GM13977 (cell line): ENCODE measurements at regions of chr7 and their contacts with region 1.

Region 1: GRCh38 chr7:101542527-101543241 is 86.4 kb downstream of the MYL10 start:
- DNase-seq: peak; percentile 78
- CTCF ChIP-seq: peak; percentile 92

Region 2: DNA sequence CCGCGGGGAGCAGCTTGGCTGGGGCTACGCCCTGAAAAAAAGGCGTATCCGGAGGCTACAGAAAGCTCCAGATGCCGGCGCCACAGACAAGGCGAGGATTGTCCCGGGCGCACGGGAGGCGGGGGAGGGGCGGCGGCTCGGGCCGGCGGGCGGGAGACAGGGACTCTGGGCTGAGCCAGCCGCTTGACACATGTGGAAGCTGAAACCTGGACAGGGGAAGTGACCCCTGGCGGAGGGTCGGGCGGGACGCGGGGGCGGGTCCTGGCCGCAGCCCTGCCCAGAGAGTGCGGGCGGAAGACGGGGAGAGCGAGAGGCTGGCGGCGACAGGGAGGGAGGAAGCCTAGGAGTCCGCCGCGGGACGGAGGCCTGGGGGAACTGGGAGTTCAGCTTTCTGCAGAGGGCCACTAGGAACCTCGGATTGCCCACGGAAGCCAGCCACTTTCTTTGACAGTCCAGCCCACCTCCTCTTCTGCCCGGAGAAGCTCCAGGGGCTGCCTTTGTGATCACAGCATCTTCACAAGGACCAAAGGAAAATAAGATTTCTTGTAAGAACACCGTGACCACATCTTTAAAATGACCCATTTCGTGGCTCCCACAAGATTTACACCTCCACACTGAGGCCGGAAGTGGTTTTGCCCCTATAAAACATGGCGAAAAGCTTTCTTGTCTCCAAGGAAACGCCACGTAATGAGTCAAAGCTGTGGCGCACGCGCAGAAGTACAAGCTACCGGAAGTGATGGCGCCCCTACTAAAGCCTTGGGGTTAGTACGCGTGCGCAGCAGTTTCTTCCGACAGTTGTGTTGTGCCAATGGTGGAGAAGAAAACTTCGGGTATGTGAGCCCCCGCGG is 325.1 kb before region 1 on chr7 and contains the starts of genes PLOD3 and ZNHIT1:
- in situ Hi-C with region 1: no loop called
- DNase-seq: peak; percentile 100
- CTCF ChIP-seq: no peak

Region 3: DNA sequence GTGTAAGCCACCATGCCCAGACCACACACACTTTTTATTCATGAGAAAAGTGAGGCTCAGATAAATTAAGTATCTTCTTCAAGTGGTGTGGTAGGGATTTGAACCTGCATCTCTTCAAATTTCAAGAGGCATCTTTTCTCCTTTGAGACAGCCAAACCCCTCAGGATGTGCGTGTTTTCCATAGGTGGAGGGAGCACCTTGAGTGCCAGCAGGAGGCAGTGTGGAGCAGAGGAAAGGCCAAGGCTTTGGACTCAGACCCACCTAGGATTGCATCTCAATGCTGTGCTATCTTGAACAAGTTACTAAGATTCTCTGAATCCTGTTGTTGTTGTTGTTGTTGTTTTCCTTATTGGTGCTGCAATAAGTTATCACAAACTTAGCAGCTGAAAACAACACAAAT is 126.6 kb after region 1 on chr7:
- in situ Hi-C with region 1: no loop called
- DNase-seq: no peak
- CTCF ChIP-seq: peak; percentile 33

Region 4: GRCh38 chr7:102260856-102261255 is 718.2 kb after region 1 on chr7:
- in situ Hi-C with region 1: loop called (anchors 10 kb)
- DNase-seq: no peak
- CTCF ChIP-seq: no peak

Region 5: GRCh38 chr7:102396027-102397019 is 853.6 kb after region 1 on chr7 and contains the start of gene PRKRIP1:
- in situ Hi-C with region 1: loop called (anchors 10 kb)
- DNase-seq: peak; percentile 92
- CTCF ChIP-seq: no peak